ENCODE measurements at regions of chr2 and their contacts with region 1.

Region 1: GRCh38 chr2:16293398-16293797 is 353.0 kb downstream of the MYCN start:
- DNase-seq: no peak
- H3K4me3 ChIP-seq: no peak overlapping the region
- H3K27ac ChIP-seq: no peak overlapping the region
- H3K4me1 ChIP-seq: no peaks in the 10 kb centered on the region
- H3K27me3 ChIP-seq: no peaks in the 10 kb centered on the region
- CTCF ChIP-seq: no peak

Region 2: DNA sequence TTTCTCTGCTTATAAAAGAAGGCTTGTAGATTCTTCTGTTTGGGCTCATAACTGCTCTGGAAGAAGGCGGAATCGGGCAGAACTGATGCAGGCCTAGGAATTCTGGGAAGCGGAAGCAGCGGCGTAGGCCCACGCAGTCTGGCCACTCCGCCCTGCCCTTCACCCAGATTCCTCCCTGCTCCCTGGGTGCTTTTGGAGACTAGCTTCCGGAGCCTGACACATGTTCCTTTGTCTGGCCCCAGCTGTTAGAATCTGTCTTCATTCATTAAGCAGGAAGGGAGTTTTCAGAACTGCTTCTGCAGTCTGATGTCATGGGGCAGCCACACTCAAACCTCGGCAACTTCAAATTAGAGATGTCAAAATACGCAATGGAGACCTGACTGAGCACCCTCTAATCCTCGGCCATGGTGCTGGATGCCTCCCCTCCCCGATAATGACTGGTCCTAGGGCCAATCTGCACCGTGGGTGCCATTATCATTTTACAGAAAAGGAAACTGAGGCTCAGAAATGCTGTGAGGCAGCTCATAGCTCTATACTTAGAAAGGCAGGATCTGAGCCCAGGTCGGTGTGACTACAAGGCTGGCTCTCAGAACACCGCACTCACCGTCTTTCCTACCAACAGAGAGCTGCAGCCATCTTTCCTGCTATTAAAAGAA is 77.4 kb before region 1 on chr2:
- CTCF ChIA-PET with region 1: no interaction called
- dilution Hi-C with region 1: no loop called
- in situ Hi-C with region 1: no loop called
- intact Hi-C with region 1: no loop called
- DNase-seq: no peak
- H3K4me3 ChIP-seq: no peak overlapping the region
- H3K27ac ChIP-seq: no peak overlapping the region
- H3K4me1 ChIP-seq: no peaks in the 10 kb centered on the region
- H3K27me3 ChIP-seq: no peaks in the 10 kb centered on the region
- CTCF ChIP-seq: no peak

Region 3: DNA sequence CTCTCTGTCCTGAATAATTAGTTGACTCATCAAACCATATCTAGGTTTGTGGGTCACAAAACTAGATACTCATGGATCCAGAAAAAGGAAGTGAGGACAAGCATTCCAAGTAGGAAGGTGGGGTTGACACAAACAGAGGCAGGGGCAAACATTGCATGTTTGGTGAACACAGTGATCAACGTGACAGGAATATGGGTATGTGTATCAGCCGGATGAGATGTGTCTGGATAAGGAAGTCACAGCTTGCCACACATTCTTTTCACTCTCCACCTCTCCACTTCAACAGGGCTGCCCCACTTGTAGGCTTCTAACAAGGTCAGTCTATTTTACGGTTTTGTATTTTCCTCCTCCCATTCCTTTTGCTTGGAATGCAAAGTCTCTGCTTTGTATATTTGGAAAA is 53.3 kb after region 1 on chr2:
- CTCF ChIA-PET with region 1: no interaction called
- dilution Hi-C with region 1: loop called (anchors 5 kb)
- in situ Hi-C with region 1: no loop called
- intact Hi-C with region 1: no loop called
- DNase-seq: no peak
- H3K4me3 ChIP-seq: no peak overlapping the region
- H3K27ac ChIP-seq: no peak overlapping the region
- H3K4me1 ChIP-seq: no peaks in the 10 kb centered on the region
- H3K27me3 ChIP-seq: no peaks in the 10 kb centered on the region
- CTCF ChIP-seq: no peak

Region 4: DNA sequence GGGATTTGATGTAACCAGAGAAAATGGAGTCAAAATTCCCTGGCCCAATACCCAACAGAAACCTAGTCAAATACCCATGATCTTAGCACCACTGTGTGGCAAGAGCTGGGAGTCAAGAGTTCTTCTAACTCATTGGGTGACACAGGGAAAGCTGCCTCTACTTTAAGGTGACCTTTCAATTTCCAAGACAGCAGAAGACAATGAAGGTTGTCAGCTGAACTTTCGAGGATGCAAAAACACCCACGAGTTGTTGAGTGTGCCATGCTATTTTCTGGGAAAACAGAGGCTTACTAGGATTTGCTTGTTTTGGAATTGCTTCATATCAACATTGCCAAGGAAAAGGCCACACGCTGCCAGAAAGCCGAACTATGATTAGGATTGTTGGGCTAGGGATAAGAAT is 433.9 kb after region 1 on chr2:
- CTCF ChIA-PET with region 1: no interaction called
- dilution Hi-C with region 1: no loop called
- in situ Hi-C with region 1: no loop called
- intact Hi-C with region 1: loop called (anchors 5 kb)
- DNase-seq: no peak
- H3K4me3 ChIP-seq: no peak overlapping the region
- H3K27ac ChIP-seq: no peak overlapping the region
- H3K4me1 ChIP-seq: no peaks in the 10 kb centered on the region
- H3K27me3 ChIP-seq: peaks cover 1% of the 10 kb centered on the region
- CTCF ChIP-seq: peak in 1 of 2 donors; percentile 31

Measured in mammary epithelial cell (primary cell).